Posterior cingulate gyrus (tissue), 11 donors: ENCODE measurements at regions of chr2 and their contacts with region 1.

Region 1: GRCh38 chr2:180125245-180125962 is 118.3 kb upstream of the CWC22 start:
- DNase-seq: peak; percentile 29 to 93 (median 58)

Region 2: DNA sequence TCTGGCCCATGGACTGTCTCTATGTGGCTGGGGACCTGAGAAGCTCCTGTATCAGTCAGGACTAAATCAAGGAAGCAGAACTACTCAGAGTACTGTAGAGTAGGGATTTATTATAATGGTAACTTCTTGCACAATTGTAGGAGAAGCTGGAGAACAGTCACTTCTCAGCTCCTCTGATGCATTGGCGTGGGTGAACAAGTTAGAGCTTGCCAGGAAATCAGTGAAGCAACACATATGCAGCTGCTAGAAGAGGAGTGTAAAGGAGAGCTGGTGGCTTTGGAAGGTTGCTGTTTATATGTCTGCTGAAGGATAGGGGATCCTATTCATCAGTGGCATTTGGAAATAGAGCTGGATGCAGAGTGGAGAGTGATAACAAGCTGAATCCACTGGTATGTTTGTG is 97.2 kb after region 1 on chr2:
- intact Hi-C with region 1: no loop called
- DNase-seq: peak in 4 of 10 donors; percentile 28 to 71 (median 36)

Region 3: DNA sequence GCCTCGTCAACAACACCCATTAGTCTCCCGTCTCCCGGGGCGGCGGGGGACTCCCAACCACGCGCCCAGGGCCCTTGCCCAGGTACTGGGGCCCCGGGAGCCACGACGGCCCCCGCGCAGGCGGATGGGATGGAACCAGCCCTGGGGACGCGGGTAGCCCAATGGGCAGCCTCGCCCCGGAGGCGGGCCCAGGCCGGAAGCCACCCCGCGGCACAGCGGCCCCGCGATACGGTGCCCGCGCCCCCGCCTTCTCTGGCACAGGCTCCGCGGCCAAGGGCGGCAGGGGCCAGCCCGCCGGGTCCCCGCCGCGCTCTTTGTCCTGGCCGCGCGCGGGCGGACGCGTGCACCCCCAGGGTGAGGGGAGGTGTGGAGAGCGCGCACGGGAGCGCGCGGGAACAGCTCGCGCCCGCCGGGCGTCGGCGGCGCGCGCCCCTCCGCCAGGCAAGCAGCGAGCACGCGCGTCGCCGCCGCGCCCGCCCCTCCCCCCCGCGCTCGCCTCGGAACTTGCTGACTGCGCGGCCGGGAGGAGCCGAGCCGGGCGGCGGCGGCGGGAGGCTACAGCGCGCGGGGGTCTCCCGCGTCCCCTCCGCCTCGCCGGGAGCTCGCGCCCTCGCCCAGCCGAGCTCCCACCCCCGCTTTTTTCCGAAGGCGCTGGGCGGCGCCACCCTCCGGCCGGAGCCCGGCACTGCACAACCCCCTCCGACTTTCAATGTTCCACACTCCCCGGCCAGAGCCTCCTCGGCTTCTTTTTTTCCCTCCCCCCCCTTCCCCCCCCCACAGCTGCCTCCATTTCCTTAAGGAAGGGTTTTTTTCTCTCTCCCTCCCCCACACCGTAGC is 854.9 kb after region 1 on chr2 and contains the start of gene UBE2E3:
- intact Hi-C with region 1: loop called (anchors 10 kb)
- DNase-seq: peak; percentile 69 to 97 (median 78)

Region 4: DNA sequence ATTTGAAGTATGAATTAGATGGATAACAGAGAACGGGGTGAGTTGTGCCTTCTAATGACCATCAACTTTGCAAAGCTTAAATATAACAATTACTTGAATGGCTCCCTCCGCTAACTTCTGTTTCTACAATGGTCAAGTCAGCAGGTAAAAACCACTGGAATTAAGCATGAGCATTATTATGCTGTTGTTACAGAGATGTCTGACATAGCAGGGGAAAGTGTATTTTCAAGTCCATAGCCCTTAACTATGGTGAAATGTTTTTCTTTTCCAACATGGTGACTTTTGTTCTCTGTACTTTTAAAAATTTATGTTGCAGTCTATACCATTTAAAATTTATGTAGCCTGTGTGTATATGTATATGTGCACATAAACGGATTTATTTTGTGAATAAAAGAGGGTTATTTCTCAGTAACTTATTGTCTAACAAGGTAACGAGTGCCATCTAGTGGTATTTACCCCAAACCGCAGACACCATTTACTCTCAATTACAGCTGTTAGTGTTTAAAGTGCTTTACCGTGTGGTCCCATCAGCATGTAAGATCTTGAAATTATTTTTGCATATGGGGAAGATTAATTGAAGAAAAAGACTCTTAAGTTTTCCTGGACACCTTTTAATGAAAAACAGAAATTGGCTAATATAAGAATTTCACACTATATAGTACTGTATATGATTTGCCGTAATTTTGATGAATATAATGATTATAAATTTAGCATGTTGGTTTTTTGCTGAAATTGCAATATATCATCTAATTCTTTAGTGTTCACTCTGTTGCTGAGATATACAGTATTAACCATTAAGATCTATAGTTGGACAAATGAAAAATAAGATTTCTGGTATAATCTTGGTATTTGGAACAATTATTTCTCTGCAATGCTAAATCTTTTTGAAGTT is 933.2 kb after region 1 on chr2:
- intact Hi-C with region 1: loop called (anchors 5 kb)
- DNase-seq: peak in 1 of 10 donors; percentile 11

Region 5: DNA sequence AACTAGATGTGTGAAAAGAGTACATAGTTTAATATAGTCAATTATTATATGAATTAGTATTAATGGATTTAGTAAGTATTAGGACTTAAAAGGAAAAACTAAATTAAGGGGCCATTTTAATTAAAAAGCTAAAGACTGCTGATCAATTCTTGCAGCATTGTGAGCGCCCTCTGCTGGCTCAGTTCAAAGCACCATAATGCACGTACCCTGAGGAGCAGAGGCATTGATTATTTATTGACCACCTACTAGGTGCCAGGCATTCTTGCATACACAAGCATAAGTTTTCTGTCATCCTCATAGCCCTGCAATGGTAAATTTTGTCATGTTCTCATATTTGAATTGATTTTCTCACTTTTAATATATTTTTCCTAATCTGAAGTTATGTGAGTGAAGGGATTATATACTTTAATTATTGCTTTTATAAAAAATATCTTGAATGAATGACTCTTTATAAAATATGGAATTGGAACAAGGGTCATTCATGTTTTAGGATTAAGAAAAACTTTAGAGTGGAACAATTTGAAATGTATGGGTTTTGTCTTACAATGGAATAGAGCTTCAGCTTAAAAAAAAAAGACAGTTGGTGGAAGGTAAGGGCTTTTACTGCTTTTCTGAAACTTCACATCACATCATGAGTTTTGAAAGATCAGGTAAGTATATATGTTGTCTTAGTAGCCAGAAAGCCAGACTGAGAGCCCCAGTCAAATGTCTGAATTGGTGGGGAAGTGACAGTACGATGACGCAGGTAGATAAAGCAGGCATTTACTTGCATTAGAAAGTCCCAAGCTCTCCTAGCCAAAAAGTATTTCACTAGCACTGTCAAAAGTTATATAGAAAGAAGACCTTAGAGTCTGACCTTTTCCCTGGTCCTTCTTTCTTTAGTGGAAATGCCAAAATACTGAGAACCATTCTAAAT is 1341.5 kb after region 1 on chr2:
- intact Hi-C with region 1: loop called (anchors 5 kb)
- DNase-seq: peak; percentile 20 to 86 (median 64)